ENCODE measurements at regions of chr1 and their contacts with region 1.

Region 1: DNA sequence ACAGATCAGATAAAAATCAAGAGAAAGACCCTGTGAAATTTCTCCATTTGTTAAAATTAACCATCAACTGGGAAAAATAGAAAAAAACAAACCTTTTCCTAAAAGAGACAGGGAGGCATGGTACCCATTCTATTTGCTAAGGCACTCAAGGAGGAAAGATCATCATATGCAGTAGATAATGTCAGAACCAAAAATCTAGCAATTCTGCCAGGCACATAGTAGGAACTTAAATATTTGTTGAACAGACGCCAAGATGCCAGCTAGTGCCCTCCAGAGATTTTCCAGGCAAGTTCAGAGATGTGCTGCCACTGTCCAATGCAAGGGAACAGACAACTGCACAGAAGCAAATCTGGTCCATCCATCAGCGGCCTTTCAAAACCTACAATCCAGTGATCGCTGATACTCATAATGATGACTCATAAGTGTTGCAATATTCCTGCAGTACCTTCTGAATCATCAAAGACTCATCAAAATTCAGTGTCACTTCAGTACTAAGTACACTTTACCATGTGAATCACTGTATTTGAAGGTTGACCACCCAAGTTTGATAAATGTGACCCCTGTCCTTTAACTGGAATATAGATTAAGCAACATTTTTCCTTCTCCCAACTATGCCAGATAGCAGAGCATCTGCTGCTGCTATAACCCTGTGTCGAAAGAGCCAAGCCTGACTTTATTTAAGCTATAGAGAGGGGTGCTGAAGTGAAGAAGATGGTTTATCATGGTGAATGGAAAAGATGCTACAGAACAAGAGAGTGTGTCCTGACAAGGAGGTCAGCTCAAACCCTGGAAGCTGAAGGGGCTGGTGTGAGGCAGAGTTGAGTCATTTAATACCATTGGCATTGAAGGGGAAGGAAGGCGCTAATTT is 99.1 kb downstream of the MT1HL1 start:
- DNase-seq: no peak
- H3K4me3 Mint-ChIP-seq: no peak overlapping the region
- H3K27ac Mint-ChIP-seq: no peak overlapping the region
- H3K4me1 Mint-ChIP-seq: peaks cover 5% of the 10 kb centered on the region
- H3K27me3 Mint-ChIP-seq: no peaks in the 10 kb centered on the region

Region 2: DNA sequence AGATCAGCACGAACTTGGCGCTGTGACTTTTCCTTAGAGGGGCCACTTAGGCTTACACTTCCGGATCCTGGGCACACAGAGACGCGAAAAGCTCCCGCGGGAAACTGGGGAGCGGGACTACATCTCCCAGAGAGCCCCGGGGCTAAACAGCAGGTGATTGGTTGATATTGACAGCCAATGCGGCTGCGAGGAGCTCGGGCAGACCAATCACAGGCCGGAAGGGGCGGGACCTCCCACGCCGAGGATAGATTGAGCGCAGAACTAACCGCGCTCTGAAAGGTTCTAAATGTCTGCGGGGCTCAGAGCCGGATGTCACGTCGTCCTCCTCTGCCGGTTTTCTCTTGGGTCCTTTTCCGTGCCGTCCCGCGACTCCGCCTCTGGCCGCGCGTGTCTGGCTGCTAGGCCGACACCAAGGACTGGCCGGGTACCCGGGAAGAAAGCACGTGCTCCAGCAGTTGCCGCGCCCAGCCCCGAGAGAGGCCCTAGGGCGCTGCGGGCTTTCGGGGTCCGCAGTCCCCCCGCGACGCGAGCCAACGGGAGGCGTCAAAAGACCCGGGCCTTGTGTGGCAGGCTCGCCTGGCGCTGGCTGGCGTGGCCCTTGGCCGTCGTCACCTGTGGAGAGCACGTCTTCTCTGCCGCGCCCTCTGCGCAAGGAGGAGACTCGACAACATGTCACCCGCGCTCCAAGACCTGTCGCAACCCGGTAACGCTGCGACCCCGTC is 109.9 kb before region 1 on chr1 and contains the start of gene MTR:
- intact Hi-C with region 1: no loop called
- DNase-seq: peak; percentile 94
- H3K4me3 Mint-ChIP-seq: peak within 1 kb of the TSS; percentile 92
- H3K27ac Mint-ChIP-seq: peak within 1 kb of the TSS; percentile 98
- H3K4me1 Mint-ChIP-seq: peaks cover 32% of the 10 kb centered on the region
- H3K27me3 Mint-ChIP-seq: peaks cover 10% of the 10 kb centered on the region
- total RNA-seq, gene MTR: 59.2 and 62.2 TPM in 2 replicates

Region 3: GRCh38 chr1:236862615-236863211 is 42.4 kb before region 1 on chr1:
- intact Hi-C with region 1: no loop called
- DNase-seq: no peak
- H3K4me3 Mint-ChIP-seq: no peak overlapping the region
- H3K27ac Mint-ChIP-seq: no peak overlapping the region
- H3K4me1 Mint-ChIP-seq: peaks cover 23% of the 10 kb centered on the region
- H3K27me3 Mint-ChIP-seq: no peaks in the 10 kb centered on the region

Region 4: DNA sequence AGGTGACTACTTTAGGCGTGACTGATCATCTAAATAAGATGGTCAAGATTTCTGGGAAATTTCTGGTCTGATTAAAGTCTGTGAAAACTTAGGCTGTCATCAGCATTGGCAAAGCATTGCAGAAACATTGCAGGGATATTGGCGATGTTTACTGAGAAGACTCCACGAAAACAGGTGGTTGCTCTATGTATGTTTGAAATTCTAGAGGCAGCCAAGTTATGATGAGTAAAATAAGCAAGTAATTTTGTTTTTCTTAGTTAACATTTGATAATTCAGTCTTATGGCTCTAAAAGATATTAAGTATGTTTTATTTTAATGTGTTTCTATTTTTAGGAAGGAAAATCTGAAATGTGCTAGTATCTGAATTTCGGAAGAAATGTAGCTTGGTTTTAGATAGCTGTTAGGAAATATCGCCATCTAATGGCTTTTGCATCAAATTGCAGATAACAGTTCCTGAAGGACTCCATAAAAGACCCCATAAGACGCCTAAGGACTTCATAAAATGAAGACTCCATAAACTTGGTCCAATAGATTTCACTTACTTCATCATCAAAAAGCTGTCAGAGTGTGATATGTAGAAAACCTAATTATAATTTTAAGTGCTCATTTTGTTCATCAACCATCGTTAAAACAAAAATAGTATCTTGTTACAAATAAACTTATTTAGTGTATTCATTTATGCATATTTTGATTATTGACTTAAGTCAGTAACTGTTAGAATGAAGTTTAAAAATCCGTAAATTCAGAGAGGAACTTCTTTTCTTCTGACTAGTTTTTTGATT is 481.4 kb after region 1 on chr1:
- intact Hi-C with region 1: loop called (anchors 10 kb)
- DNase-seq: no peak
- H3K4me3 Mint-ChIP-seq: no peak overlapping the region
- H3K27ac Mint-ChIP-seq: no peak overlapping the region
- H3K4me1 Mint-ChIP-seq: peaks cover 9% of the 10 kb centered on the region
- H3K27me3 Mint-ChIP-seq: no peaks in the 10 kb centered on the region

Measured in activated T-helper 2 cell treated with anti-CD3 and anti-CD28 coated beads, Interferon-gamma antibody, Interleukin-2, Interleukin-4, amounts not matched to agents 10 μg/mL and 5 μg/mL and 100 μg/mL, durations not matched to agents 14 hours and 24 hours and 36 hours (primary cell).